GM12878 (cell line): ENCODE measurements at regions of chr9 and their contacts with region 1.

Region 1: DNA sequence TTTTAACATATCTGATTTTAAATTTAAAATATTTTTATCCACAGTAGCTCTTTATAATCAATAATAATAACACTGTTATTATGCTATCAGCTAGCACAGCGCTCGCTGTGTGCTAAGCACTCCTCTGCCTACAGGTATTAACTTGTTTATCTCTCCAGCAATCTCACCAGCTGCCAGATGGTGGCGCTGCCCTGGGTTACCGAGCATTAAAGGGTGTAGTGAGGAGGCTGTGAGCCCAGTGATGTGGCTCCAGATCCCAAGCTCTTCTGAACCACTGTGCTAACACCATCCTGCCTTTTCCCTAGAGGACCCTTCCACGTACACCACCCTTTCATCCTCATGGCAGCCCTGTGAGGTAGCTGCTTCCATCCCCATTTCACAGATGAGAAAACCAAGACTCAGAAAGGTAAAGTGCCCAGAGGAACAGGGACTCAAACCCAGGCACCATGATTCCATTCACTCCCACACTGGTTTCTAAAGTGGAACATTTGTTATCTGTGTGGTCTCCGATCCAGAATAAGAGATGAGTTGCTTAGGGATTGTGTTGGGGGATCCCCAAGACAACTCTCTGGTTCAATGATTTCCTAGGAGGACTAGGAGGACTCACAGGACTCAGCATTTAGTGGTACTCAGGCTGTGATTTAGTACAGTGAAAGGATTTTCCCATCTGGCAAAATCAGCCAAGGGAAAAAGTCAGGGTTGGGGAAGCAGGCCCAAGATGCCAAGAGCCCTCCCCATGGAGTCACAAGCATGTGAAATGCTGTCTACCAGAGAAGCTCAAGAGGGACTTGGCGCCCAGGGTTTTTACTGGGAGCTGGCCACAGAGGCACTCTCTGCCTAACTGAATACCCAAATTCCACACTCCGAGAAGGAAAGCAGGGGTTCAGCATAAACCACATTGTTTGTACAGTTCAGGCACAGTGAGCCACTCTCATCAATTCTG is 7.0 kb downstream of the IGFBPL1 start:
- DNase-seq: no peak
- ATAC-seq: peak; percentile 81
- H3K4me3 ChIP-seq: no peak overlapping the region
- H3K27ac ChIP-seq: no peak overlapping the region
- H3K4me1 ChIP-seq: no peaks in the 10 kb centered on the region
- H3K27me3 ChIP-seq: peaks cover 0 to 4% of the 10 kb centered on the region in 2 experiments; a peak in 2 of 4 replicates
- CTCF ChIP-seq: peak; percentile 57 to 71 (median 64); a peak in 5 of 6 replicates
- EP300 ChIP-seq: no peak
- POLR2A ChIP-seq: no peak
- RAD21 ChIP-seq: peak; percentile 32; the same call in 1 of the 2 replicates

Region 2: GRCh38 chr9:38392235-38393127 is 24.8 kb before region 1 on chr9 and contains the start of gene ALDH1B1:
- CTCF ChIA-PET with region 1: interaction called, 12 read pairs
- POLR2A ChIA-PET with region 1: no interaction called
- RAD21 ChIA-PET with region 1: no interaction called
- SMC1A ChIA-PET with region 1: no interaction called
- in situ Hi-C with region 1: no loop called
- intact Hi-C with region 1: no loop called
- DNase-seq: peak; percentile 38
- ATAC-seq: peak; percentile 98
- H3K4me3 ChIP-seq: peak within 1 kb of the TSS; percentile 93
- H3K27ac ChIP-seq: peak within 1 kb of the TSS; percentile 77
- H3K4me1 ChIP-seq: peaks cover 3% of the 10 kb centered on the region; the same call in 1 of the 2 replicates
- H3K27me3 ChIP-seq: no peaks in the 10 kb centered on the region
- CTCF ChIP-seq: peak; percentile 10 to 23 (median 16); a peak in 2 of 6 replicates
- EP300 ChIP-seq: no peak
- POLR2A ChIP-seq: peak; percentile 74
- RAD21 ChIP-seq: no peak
- polyA plus RNA-seq, gene ALDH1B1: 8.6 to 14.2 TPM

Region 3: GRCh38 chr9:38432922-38433510 is 15.7 kb after region 1 on chr9:
- CTCF ChIA-PET with region 1: interaction called, 66 read pairs
- POLR2A ChIA-PET with region 1: interaction called, 3 read pairs
- RAD21 ChIA-PET with region 1: no interaction called
- SMC1A ChIA-PET with region 1: interaction called, 4 read pairs
- in situ Hi-C with region 1: no loop called
- intact Hi-C with region 1: no loop called
- DNase-seq: no peak
- ATAC-seq: peak; percentile 72
- H3K4me3 ChIP-seq: no peak overlapping the region
- H3K27ac ChIP-seq: no peak overlapping the region
- H3K4me1 ChIP-seq: no peaks in the 10 kb centered on the region
- H3K27me3 ChIP-seq: no peaks in the 10 kb centered on the region; a peak in 1 of 4 replicates
- CTCF ChIP-seq: peak; percentile 52 to 61 (median 60)
- EP300 ChIP-seq: no peak
- POLR2A ChIP-seq: no peak
- RAD21 ChIP-seq: peak; percentile 50

Region 4: GRCh38 chr9:38467404-38467803 is 50.1 kb after region 1 on chr9:
- CTCF ChIA-PET with region 1: interaction called, 11 read pairs
- POLR2A ChIA-PET with region 1: no interaction called
- RAD21 ChIA-PET with region 1: no interaction called
- SMC1A ChIA-PET with region 1: no interaction called
- in situ Hi-C with region 1: no loop called
- intact Hi-C with region 1: loop called (anchors 5 kb)
- DNase-seq: no peak
- ATAC-seq: peak; percentile 51
- H3K4me3 ChIP-seq: no peak overlapping the region
- H3K27ac ChIP-seq: no peak overlapping the region
- H3K4me1 ChIP-seq: no peaks in the 10 kb centered on the region
- H3K27me3 ChIP-seq: peaks cover 0 to 3% of the 10 kb centered on the region in 2 experiments; a peak in 1 of 4 replicates
- CTCF ChIP-seq: no peak
- EP300 ChIP-seq: no peak
- POLR2A ChIP-seq: no peak
- RAD21 ChIP-seq: no peak

Region 5: GRCh38 chr9:38641985-38642864 is 225.0 kb after region 1 on chr9:
- CTCF ChIA-PET with region 1: interaction called, 13 read pairs
- POLR2A ChIA-PET with region 1: no interaction called
- RAD21 ChIA-PET with region 1: no interaction called
- SMC1A ChIA-PET with region 1: no interaction called
- in situ Hi-C with region 1: no loop called
- intact Hi-C with region 1: no loop called
- DNase-seq: no peak
- ATAC-seq: peak; percentile 89
- H3K4me3 ChIP-seq: no peak overlapping the region
- H3K27ac ChIP-seq: no peak overlapping the region
- H3K4me1 ChIP-seq: no peaks in the 10 kb centered on the region
- H3K27me3 ChIP-seq: no peaks in the 10 kb centered on the region
- CTCF ChIP-seq: peak; percentile 30 to 54 (median 37); a peak in 5 of 6 replicates
- EP300 ChIP-seq: no peak
- POLR2A ChIP-seq: no peak
- RAD21 ChIP-seq: peak; percentile 65